ENCODE measurements at regions of chr2 and their contacts with region 1.

Region 1: DNA sequence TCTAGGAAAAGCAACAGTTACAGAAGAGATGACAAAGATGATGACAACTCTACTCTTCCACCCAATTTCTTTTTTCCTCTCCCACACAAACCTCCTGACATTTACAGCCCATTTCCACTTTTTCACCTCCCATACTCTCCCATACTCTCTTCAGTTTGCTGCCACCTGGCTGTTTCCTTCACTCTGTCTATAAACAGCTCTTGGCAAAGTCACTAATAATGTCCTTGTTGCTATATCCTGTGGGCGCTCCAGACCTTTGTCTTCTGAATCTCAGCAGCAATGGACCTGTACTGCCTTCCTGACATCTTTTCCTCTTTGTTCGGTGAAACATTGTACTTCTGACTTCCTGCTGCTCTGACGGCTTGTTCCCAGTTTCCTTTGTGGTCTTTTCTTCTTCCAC is 60.7 kb upstream of the CAVIN2 start:
- DNase-seq: peak in 1 of 2 donors; percentile 15
- ATAC-seq: peak; percentile 46 to 95 (median 84)
- H3K4me3 ChIP-seq: no peak overlapping the region
- H3K27ac ChIP-seq: peak overlapping the region in 2 of 10 donors; percentile 32
- H3K4me1 ChIP-seq: peaks cover 0 to 13% (median 6%) of the 10 kb centered on the region in 9 donors
- H3K27me3 ChIP-seq: no peaks in the 10 kb centered on the region
- CTCF ChIP-seq: peak in 8 of 9 donors; percentile 11 to 54 (median 36)

Region 2: DNA sequence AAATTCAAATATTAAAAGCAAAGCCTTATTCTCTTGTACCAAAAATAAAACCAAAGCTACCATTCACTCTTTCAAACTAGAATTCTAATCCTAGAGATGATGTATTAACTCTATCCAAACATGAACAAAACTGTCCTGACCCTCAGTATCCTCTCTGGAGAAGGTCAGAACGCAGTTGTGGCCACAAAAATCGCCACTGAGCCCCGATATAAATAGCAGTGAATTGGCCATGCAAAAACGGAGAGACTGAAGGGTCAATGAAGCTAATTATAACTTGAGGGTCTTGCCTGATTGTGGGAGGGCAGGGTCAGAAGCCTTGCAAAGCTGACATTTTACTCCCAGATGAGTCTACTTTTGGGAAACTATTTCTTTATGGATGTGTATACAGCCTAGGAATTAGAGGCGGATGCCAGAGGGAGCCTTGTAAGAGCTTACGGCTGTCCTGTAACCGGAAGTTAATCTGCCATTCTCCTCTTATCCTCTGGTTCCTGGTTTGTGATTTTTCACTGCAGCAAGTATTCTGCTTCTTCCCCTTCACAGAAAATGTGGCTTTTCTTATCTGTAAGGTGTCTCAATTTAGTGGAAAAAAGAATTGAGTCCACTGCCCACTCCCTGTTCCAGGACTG is 88.7 kb before region 1 on chr2:
- intact Hi-C with region 1: loop called in 1 of 10 experiments (anchors 5 kb)
- DNase-seq: no peak
- ATAC-seq: peak in 3 of 8 donors; percentile 55 to 75 (median 66)
- H3K4me3 ChIP-seq: peak overlapping the region in 6 of 10 donors; percentile 6 to 37 (median 11)
- H3K27ac ChIP-seq: peak overlapping the region in 5 of 10 donors; percentile 1 to 46 (median 14)
- H3K4me1 ChIP-seq: peaks cover 0 to 14% (median 0%) of the 10 kb centered on the region in 9 donors
- H3K27me3 ChIP-seq: no peaks in the 10 kb centered on the region
- CTCF ChIP-seq: no peak

Region 3: DNA sequence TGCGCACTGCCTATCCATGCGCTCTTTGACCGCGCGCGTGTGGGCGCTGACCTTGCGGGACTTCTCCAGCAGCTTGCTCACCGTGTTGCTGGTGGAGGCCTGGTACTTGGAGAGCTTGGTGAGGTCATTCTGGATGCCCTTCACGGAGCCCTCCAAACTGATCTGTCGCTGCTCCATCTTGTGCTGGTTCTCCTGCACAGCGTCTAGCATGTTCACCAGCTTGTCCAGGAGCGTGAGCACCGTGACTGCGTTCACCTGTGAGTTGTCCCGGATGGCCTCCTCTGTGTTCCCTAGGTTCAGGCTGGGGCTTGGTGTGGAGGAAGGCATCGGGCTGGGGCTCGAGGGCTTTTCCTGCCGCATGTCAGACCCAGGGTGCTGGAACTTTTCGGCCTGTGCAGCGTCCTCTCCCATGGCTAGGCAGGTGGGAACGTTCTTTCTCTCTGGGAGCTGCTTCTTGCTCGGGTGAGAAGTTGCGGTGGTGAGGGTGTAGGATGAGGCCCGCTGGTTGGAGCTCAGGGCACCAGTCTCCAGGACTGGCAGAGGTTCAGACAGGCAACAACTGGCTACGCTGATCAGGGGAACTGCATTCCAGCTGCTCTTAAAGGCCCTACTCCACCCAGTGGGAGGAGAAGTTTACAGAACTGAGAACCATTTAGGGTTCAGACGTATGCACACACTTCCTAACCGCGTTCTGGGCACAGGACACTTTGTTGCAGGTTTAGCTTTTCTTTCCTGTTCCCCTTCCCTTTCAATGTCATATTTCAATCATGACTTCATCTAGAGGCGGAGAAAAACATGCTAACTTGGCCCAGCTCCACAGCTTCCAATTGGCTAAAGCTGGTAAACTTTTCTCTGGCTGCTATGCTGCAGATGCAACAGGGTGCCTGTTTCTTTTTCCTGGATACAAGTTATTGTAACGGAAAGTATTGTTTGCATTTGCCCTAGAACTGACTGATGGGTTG is 60.7 kb before region 1 on chr2 and contains the start of gene CAVIN2:
- intact Hi-C with region 1: loop called in 3 of 10 experiments (anchors 5 to 10 kb)
- DNase-seq: peak; percentile 50 to 88
- ATAC-seq: peak; percentile 79 to 92 (median 88)
- H3K4me3 ChIP-seq: peak within 1 kb of the TSS; percentile 62 to 81 (median 76)
- H3K27ac ChIP-seq: peak within 1 kb of the TSS; percentile 87 to 97 (median 94)
- H3K4me1 ChIP-seq: peaks cover 10 to 57% (median 42%) of the 10 kb centered on the region in 9 donors
- H3K27me3 ChIP-seq: no peaks in the 10 kb centered on the region
- CTCF ChIP-seq: peak in 3 of 9 donors; percentile 16 to 23 (median 17)
- total RNA-seq, gene CAVIN2: 73.5 to 126 (median 101) TPM

Region 4: DNA sequence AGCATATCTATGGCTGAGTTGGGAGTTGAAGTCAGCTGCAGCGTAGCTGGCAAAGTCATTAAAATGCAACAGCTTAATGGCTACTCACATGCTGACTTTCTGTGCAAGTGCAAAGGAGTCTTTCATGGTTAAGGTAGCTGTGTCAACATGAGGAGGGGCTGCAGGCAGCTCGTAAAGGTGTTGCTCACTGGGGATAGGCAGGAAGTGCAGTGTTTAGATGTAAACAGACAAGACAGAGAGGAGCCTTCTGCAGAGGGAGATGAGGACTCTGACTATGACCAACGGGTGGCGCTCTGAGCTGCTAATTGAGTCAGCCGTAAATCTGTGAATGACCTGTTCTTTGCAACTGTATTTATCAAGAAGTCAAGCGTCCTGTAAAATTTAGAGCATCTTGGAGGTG is 38.4 kb before region 1 on chr2:
- intact Hi-C with region 1: loop called in 1 of 10 experiments (anchors 5 kb)
- DNase-seq: no peak
- ATAC-seq: no peak
- H3K4me3 ChIP-seq: no peak overlapping the region
- H3K27ac ChIP-seq: peak overlapping the region in 3 of 10 donors; percentile 84 to 88 (median 88)
- H3K4me1 ChIP-seq: peaks cover 7 to 60% (median 42%) of the 10 kb centered on the region in 9 donors
- H3K27me3 ChIP-seq: no peaks in the 10 kb centered on the region
- CTCF ChIP-seq: peak in 3 of 9 donors; percentile 13 to 21 (median 16)

Region 5: DNA sequence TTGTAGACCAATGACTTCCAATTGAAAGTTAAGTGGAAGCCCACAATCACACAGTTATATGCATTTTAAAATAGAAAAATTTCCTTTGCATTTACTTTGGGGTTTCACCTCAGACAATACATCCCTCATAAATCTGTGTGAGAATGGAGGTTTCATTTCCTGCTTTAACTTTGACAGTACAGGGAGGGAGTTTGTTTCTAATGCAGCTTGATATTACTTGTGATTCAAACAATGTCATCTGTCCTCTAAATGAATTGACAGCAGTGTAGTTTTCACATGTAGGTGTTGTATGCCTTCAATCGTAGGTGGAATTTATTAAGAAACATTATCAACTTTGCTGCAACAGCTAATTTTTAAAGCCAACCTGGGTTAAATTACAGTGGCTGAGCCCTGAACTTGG is 212.0 kb after region 1 on chr2:
- intact Hi-C with region 1: no loop called
- DNase-seq: no peak
- ATAC-seq: no peak
- H3K4me3 ChIP-seq: no peak overlapping the region
- H3K27ac ChIP-seq: no peak overlapping the region
- H3K4me1 ChIP-seq: peaks cover 0 to 23% (median 4%) of the 10 kb centered on the region in 9 donors
- H3K27me3 ChIP-seq: no peaks in the 10 kb centered on the region
- CTCF ChIP-seq: no peak